Dendritic cell treated with granulocyte-macrophage colony-stimulating factor and Interleukin-4, amounts not matched to agents 40 ng/mL and 50 ng/mL, for 4 days (primary cell): ENCODE measurements at regions of chr3 and their contacts with region 1.

Region 1: GRCh38 chr3:72255791-72256559 is 471.0 kb upstream of the PROK2 start:
- H3K4me3 Mint-ChIP-seq: no peak overlapping the region
- H3K27ac Mint-ChIP-seq: no peak overlapping the region
- H3K4me1 Mint-ChIP-seq: peaks cover 21% of the 10 kb centered on the region
- H3K27me3 Mint-ChIP-seq: peaks cover 74% of the 10 kb centered on the region

Region 2: DNA sequence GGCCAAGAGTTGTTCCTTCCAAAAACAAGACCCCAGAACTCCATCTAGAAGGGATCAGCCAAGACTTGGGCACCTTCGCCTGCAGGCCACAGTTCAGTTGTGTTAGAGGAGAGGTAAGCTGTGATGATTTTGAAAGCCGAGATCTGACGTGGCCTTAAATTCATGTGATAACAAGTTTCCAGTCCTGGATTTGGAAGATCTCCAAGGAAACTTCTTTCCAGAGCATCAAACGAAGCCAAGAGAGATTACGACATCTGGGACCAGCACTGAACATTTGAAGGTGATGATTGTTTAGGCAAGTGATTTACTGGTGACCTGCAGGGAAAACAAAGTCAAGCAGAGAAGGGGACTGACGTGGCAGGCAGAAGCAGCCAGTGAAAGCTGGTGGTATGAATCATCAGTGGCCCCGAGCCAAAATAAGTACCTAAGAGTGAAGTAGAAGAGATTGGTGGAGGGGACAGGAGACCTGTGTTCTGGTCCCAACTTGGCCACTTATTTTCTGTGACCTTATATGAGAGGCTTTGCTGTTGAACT is 132.0 kb before region 1 on chr3:
- intact Hi-C with region 1: loop called (anchors 10 kb)
- H3K4me3 Mint-ChIP-seq: no peak overlapping the region
- H3K27ac Mint-ChIP-seq: no peak overlapping the region
- H3K4me1 Mint-ChIP-seq: peaks cover 58% of the 10 kb centered on the region
- H3K27me3 Mint-ChIP-seq: peaks cover 33% of the 10 kb centered on the region

Region 3: DNA sequence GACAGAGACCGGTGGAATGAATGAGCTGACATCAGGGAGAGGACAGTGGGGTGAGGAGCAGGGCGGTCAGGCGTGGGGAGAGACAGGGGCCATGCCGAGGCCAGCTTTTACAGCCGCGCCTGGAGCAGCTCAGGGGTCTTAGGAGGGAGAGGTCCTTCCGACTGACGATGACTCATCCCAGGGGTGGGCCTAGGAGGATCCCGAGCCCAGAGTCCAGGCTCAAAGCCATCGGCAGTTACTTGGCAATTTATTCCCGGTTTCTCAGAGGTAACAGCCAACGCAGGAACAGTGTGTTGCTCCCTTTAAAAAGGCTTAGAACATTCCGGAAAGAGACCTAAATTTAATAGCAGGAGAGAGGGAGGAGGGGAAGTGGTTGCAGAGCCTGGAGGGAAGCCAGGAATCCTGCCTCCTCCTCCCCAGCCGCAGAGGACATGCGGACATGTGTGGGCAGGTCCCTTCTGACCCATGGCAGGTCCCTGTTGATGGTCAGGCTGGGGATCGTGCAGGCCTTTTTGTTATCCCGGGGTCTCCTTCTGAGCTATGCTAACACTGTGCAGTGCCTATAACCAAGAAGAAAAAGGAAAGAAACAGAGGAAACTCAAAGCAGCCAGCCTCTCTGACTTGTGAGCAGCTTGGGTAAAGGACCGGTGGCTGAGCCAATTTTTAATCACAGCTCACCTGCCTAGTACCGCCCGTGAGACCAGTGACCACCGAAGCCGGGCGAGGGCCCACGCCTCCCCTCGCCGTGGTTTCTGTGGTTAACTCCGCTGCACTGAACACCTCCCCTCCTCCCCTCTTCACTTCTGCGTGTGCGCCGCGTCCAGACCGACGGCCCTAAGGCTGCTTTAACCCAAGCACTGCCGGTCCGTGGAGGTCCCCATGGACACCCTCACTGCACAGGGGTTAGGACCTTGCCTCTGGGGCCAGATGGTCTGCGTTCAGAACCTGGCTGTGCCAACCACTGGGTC is 78.6 kb before region 1 on chr3:
- intact Hi-C with region 1: loop called (anchors 10 kb)
- H3K4me3 Mint-ChIP-seq: peak overlapping the region; percentile 67
- H3K27ac Mint-ChIP-seq: peak overlapping the region; percentile 80
- H3K4me1 Mint-ChIP-seq: peaks cover 65% of the 10 kb centered on the region
- H3K27me3 Mint-ChIP-seq: peaks cover 76% of the 10 kb centered on the region

Region 4: GRCh38 chr3:72310419-72311380 is 54.7 kb after region 1 on chr3:
- intact Hi-C with region 1: loop called (anchors 10 kb)
- H3K4me3 Mint-ChIP-seq: peak overlapping the region; percentile 42
- H3K27ac Mint-ChIP-seq: peak overlapping the region; percentile 78
- H3K4me1 Mint-ChIP-seq: peaks cover 29% of the 10 kb centered on the region
- H3K27me3 Mint-ChIP-seq: peaks cover 19% of the 10 kb centered on the region

Region 5: GRCh38 chr3:72993391-72993790 is 737.4 kb after region 1 on chr3:
- intact Hi-C with region 1: no loop called
- H3K4me3 Mint-ChIP-seq: no peak overlapping the region
- H3K27ac Mint-ChIP-seq: no peak overlapping the region
- H3K4me1 Mint-ChIP-seq: peaks cover 13% of the 10 kb centered on the region
- H3K27me3 Mint-ChIP-seq: no peaks in the 10 kb centered on the region